B cell (primary cell): ENCODE measurements at regions of chr18 and their contacts with region 1.

Region 1: DNA sequence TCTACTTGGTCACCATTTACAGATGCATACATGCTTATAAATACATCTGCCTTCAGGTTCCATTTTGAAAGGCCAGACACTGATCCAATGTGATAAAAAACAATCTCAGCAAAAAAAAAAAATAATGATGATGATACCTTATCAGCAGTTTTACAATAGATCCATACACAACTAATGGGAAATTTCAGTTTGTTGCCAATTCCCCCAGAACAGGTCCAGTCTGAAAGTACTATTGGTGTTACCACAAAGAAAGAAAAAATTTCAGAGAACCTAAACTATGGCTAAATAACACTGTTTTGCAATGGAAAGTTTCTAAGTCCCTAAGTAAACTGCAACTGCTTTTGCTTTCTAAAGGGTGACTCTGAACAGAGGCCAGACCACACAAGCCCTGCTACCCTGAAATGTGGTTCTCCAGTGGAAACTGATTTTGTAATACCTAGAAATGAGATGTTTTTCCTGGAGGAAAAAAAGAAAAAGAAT is 54.1 kb downstream of the LPIN2 start:
- DNase-seq: peak; percentile 30
- ATAC-seq: peak; percentile 15
- H3K4me3 ChIP-seq: peak overlapping the region in 1 of 5 experiments; percentile 42
- H3K4me3 Mint-ChIP-seq: peak overlapping the region; percentile 50
- H3K27ac ChIP-seq: peak overlapping the region; percentile 82 to 84
- H3K27ac Mint-ChIP-seq: peak overlapping the region; percentile 91
- H3K4me1 ChIP-seq: peaks cover 70 to 75% of the 10 kb centered on the region in 2 donors
- H3K4me1 Mint-ChIP-seq: peaks cover 74% of the 10 kb centered on the region
- H3K27me3 ChIP-seq: no peaks in the 10 kb centered on the region
- H3K27me3 Mint-ChIP-seq: no peaks in the 10 kb centered on the region
- CTCF ChIP-seq: no peak

Region 2: DNA sequence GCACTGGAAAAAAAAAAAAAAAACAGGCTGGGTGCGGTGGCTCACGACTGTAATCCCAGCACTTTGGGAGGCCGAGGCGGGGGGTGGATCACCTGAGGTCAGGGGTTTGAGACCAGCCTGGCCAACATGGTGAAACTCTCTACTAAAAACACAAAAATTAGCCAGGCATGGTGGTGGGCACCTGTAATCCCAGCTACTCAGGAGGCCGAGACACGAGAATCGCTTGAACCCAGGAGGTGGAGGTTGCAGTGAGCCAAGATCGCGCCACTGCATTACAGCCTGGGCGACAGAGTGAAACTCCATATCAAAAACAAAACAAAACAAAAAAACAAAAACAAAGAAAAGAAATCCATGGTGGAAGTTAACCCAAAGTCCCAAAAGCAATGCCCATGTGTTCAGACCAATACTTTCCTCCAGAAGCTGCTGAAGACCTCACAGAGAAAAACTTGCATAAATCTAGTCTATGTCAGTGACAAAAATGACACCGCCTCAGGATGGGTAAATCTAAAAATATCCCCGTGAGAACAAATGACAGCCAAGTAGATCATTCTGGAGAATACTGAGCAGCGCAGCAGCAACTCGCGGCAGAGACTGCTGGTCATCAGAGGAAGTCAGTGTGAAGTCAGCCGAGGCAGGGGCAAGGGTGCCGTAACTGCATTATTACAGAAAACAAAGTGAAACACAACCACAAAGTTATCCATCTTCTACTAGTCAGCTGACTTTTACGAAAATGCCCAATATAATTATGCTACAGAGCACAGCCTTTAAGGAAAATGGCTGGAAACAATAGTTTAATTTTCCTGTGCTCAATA is 13.1 kb after region 1 on chr18:
- CTCF ChIA-PET with region 1: interaction called, 79 read pairs
- POLR2A ChIA-PET with region 1: interaction called, 8 read pairs
- intact Hi-C with region 1: loop called (anchors 1 kb)
- DNase-seq: peak; percentile 86
- ATAC-seq: peak; percentile 81
- H3K4me3 ChIP-seq: peak overlapping the region; percentile 18 to 58 (median 47)
- H3K4me3 Mint-ChIP-seq: peak overlapping the region; percentile 88
- H3K27ac ChIP-seq: peak overlapping the region; percentile 89 to 91
- H3K27ac Mint-ChIP-seq: peak overlapping the region; percentile 96
- H3K4me1 ChIP-seq: peaks cover 64 to 66% of the 10 kb centered on the region in 2 donors
- H3K4me1 Mint-ChIP-seq: peaks cover 70% of the 10 kb centered on the region
- H3K27me3 ChIP-seq: no peaks in the 10 kb centered on the region
- H3K27me3 Mint-ChIP-seq: no peaks in the 10 kb centered on the region
- CTCF ChIP-seq: no peak

Region 3: DNA sequence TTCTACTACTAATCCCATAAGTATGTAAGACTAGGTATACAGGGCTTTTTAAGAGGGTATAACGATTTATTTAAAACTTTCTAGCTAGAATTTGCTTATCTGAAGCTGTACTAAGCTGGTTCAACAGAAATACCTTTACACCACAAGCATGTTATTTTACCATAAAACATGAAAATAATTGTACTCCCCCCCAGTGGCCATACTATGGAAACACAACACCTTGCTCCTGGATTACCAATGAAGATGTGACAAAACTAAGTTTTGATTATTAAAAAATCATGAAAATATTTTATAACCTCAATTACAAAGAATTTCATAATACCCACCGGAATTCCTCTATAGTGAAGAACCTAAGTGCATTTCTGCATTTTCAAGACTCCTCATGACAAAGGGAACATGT is 26.8 kb after region 1 on chr18:
- CTCF ChIA-PET with region 1: interaction called, 64 read pairs
- POLR2A ChIA-PET with region 1: interaction called, 6 read pairs
- intact Hi-C with region 1: loop called (anchors 1 kb)
- DNase-seq: peak; percentile 72
- ATAC-seq: peak; percentile 69
- H3K4me3 ChIP-seq: no peak overlapping the region
- H3K4me3 Mint-ChIP-seq: no peak overlapping the region
- H3K27ac ChIP-seq: no peak overlapping the region
- H3K27ac Mint-ChIP-seq: no peak overlapping the region
- H3K4me1 ChIP-seq: peaks cover 32 to 51% of the 10 kb centered on the region in 2 donors
- H3K4me1 Mint-ChIP-seq: peaks cover 51% of the 10 kb centered on the region
- H3K27me3 ChIP-seq: no peaks in the 10 kb centered on the region
- H3K27me3 Mint-ChIP-seq: no peaks in the 10 kb centered on the region
- CTCF ChIP-seq: peak; percentile 81

Region 4: DNA sequence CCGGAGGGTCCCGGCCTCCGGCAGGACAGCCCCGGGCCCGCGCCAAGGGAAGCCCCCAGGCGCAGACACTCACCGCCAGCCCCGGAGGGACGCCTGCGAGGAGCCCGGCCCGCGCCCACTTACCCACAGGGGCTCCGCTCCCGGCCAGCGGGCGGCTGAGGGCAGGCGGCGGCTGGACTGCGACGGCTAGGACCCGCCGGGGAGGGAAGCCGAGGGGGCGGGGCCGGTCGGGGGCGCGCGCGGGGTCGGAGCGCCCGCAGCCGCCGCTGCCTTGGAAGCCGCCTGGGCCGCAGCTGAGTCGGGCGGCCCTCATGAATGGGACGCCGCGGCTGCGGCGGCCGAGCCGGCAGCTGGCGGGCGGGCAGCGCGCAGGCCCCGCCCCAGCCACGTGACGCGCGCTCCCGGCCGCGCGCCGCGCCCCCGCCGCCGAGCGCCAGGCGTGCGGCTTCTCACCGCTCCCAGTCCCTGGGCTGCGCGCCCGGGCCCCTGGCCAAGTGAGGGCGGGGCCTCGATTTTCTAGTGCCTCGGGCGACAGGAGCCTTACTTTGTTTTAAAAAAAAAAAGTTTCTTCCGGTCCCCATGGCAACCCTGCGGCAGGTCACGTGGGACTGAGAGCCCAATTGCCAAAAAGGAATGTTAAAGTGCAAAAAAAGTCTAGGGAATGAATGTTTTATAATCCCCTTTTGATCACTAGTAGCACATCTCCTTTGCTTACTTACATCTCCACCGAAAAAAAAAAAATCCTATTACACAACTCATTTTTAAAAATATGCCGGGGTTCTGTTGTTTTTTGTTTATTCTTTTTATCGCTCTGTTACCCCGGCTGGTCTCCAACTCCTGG is 54.3 kb after region 1 on chr18 and contains the start of gene LPIN2:
- CTCF ChIA-PET with region 1: interaction called, 3 read pairs
- POLR2A ChIA-PET with region 1: no interaction called
- intact Hi-C with region 1: loop called (anchors 2 kb)
- DNase-seq: peak; percentile 96
- ATAC-seq: peak; percentile 83
- H3K4me3 ChIP-seq: peak within 1 kb of the TSS; percentile 43 to 75 (median 73)
- H3K4me3 Mint-ChIP-seq: peak within 1 kb of the TSS; percentile 93
- H3K27ac ChIP-seq: peak within 1 kb of the TSS; percentile 74 to 82
- H3K27ac Mint-ChIP-seq: peak within 1 kb of the TSS; percentile 89
- H3K4me1 ChIP-seq: peaks cover 51 to 54% of the 10 kb centered on the region in 2 donors
- H3K4me1 Mint-ChIP-seq: peaks cover 55% of the 10 kb centered on the region
- H3K27me3 ChIP-seq: no peaks in the 10 kb centered on the region
- H3K27me3 Mint-ChIP-seq: no peaks in the 10 kb centered on the region
- CTCF ChIP-seq: no peak
- total RNA-seq, gene LPIN2: 31.0 and 32.9 TPM in 2 replicates